ENCODE measurements at regions of chr20 and their contacts with region 1.

Region 1: DNA sequence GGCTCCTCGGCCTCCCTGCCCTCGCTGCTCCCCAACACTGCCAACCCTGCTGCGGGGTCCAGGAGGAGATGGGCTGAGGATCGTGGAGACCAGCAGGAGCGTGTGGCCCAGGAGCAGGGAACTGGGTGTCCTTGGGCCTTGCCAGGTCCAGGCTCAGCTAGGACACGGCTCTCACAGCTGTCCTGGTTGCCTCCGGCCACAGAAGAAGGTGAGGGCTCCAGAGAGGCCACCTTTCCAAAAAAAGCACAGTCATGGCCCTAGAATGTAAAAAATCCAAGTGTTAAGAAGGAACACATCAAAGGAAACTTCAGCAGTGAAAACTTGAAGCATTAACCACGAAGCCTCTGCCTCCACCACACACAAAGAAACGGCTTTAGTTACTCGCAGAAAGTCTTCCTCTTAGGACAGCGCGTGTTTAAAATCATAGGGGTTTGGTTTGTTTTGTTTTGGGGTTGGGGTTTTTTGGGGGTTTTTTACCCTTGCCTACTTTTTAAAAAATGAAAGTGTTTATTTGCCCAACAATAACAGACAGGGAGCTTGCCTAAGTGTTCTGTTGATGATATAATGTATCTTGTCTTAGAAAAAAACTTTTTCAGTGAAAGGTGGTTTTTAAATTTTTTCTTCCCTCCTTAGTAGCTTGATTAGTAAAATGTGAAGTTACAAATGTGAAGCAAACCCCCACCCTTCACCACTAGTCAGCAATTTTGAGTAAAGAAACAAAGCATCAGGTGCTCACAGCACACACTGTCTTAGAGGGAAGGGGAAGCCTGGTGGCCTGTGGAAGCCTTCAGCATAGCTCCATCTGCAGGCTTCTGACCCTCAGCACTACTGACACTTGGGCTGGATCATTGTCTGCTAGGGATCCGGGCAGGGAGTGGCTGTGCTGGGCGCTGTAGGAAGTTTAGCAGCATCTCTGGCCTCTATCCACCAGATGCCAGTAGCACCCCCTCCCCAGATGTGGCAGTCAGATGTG is 60.0 kb downstream of the PTPN1 start:
- DNase-seq: no peak
- H3K4me3 ChIP-seq: no peak overlapping the region
- H3K27ac ChIP-seq: no peak overlapping the region
- H3K4me1 ChIP-seq: peaks cover 38 to 53% (median 51%) of the 10 kb centered on the region in 4 donors
- H3K27me3 ChIP-seq: no peaks in the 10 kb centered on the region
- CTCF ChIP-seq: peak; percentile 14 to 28 (median 16)
- EP300 ChIP-seq: no peak
- POLR2A ChIP-seq: no peak

Region 2: GRCh38 chr20:50179507-50180016 is 390.6 kb before region 1 on chr20:
- intact Hi-C with region 1: no loop called
- DNase-seq: no peak
- H3K4me3 ChIP-seq: no peak overlapping the region
- H3K27ac ChIP-seq: no peak overlapping the region
- H3K4me1 ChIP-seq: peaks cover 0 to 8% (median 0%) of the 10 kb centered on the region in 4 donors
- H3K27me3 ChIP-seq: no peaks in the 10 kb centered on the region
- CTCF ChIP-seq: no peak
- EP300 ChIP-seq: no peak
- POLR2A ChIP-seq: no peak

Region 3: GRCh38 chr20:50484276-50484976 is 85.7 kb before region 1 on chr20:
- intact Hi-C with region 1: loop called (anchors 5 kb)
- DNase-seq: no peak
- H3K4me3 ChIP-seq: peak overlapping the region; percentile 55 to 62 (median 58)
- H3K27ac ChIP-seq: peak overlapping the region; percentile 77 to 87 (median 86)
- H3K4me1 ChIP-seq: peaks cover 5 to 15% (median 14%) of the 10 kb centered on the region in 4 donors
- H3K27me3 ChIP-seq: no peaks in the 10 kb centered on the region
- CTCF ChIP-seq: no peak
- EP300 ChIP-seq: no peak
- POLR2A ChIP-seq: no peak

Measured in esophagus muscularis mucosa (tissue), 4 donors.